Calu3 (cell line): ENCODE measurements at regions of chr11 and their contacts with region 1.

Region 1: GRCh38 chr11:28697920-28698827 is 590.0 kb downstream of the METTL15 start:
- DNase-seq: peak; percentile 68
- H3K4me3 Mint-ChIP-seq: no peak overlapping the region
- H3K27ac Mint-ChIP-seq: peak overlapping the region; percentile 81
- H3K4me1 Mint-ChIP-seq: peaks cover 74% of the 10 kb centered on the region
- H3K27me3 Mint-ChIP-seq: no peaks in the 10 kb centered on the region
- CTCF ChIP-seq: peak; percentile 90

Region 2: GRCh38 chr11:28621753-28622152 is 76.4 kb before region 1 on chr11:
- CTCF ChIA-PET with region 1: no interaction called
- intact Hi-C with region 1: loop called (anchors 5 kb)
- DNase-seq: peak; percentile 9
- H3K4me3 Mint-ChIP-seq: no peak overlapping the region
- H3K27ac Mint-ChIP-seq: peak overlapping the region; percentile 82
- H3K4me1 Mint-ChIP-seq: peaks cover 59% of the 10 kb centered on the region
- H3K27me3 Mint-ChIP-seq: no peaks in the 10 kb centered on the region
- CTCF ChIP-seq: no peak

Region 3: GRCh38 chr11:28756977-28757376 is 58.8 kb after region 1 on chr11:
- CTCF ChIA-PET with region 1: interaction called, 3 read pairs
- intact Hi-C with region 1: loop called (anchors 1 kb)
- DNase-seq: no peak
- H3K4me3 Mint-ChIP-seq: no peak overlapping the region
- H3K27ac Mint-ChIP-seq: peak overlapping the region; percentile 90
- H3K4me1 Mint-ChIP-seq: peaks cover 54% of the 10 kb centered on the region
- H3K27me3 Mint-ChIP-seq: no peaks in the 10 kb centered on the region
- CTCF ChIP-seq: no peak

Region 4: GRCh38 chr11:29019960-29020683 is 321.9 kb after region 1 on chr11:
- CTCF ChIA-PET with region 1: interaction called, 3 read pairs
- intact Hi-C with region 1: loop called (anchors 2 kb)
- DNase-seq: peak; percentile 38
- H3K4me3 Mint-ChIP-seq: no peak overlapping the region
- H3K27ac Mint-ChIP-seq: peak overlapping the region; percentile 34
- H3K4me1 Mint-ChIP-seq: peaks cover 37% of the 10 kb centered on the region
- H3K27me3 Mint-ChIP-seq: no peaks in the 10 kb centered on the region
- CTCF ChIP-seq: peak; percentile 44

Region 5: GRCh38 chr11:29333993-29334775 is 636.0 kb after region 1 on chr11:
- CTCF ChIA-PET with region 1: no interaction called
- intact Hi-C with region 1: loop called (anchors 5 kb)
- DNase-seq: peak; percentile 10
- H3K4me3 Mint-ChIP-seq: no peak overlapping the region
- H3K27ac Mint-ChIP-seq: no peak overlapping the region
- H3K4me1 Mint-ChIP-seq: peaks cover 37% of the 10 kb centered on the region
- H3K27me3 Mint-ChIP-seq: no peaks in the 10 kb centered on the region
- CTCF ChIP-seq: peak; percentile 44